Naive thymus-derived CD4-positive, alpha-beta T cell (primary cell): ENCODE measurements at regions of chr7 and their contacts with region 1.

Region 1: DNA sequence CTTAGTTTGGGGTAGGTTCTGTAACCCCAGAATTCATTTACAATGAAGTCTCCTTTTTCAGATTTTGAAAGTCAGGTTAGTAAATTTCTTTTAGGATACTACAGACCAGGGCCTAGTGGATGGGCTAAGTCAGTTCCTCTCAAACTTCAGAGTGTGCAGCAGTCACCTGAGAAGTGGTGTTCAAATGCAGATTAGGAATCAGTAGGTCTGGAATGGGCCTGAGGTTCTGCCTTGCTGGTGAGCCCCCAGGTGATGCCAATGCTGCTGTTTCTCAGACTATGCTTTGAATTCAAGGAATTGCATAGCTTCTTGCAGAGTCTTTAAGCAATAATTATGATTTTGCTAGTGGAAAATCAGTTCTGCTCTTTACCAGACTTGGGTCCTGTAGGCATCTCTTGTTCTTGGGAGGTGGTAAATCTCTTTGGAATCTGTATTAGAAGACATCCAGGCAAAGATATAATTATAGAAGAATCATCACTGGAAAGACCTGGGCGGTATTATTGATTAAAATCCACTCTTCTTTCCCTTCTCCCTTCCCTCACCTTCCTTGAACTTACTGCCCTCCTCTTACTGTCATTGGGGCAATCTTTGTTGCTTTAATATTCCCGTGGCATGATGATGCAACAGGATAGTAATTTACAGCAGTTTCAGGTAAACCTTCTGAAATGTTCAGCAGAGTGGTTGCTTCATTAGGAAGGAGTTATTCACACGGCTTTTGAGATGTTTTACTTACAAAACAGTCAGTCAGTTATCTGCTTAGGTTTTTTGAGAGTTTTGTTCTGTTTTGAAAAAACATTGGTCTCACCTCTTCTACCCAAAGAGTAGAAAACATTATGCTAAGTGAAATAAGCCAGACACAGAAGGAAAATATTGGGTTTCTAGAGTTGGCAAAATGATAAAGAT is 87.2 kb downstream of the NRF1 start:
- DNase-seq: no peak
- ATAC-seq: no peak
- H3K4me3 ChIP-seq: no peak overlapping the region
- H3K4me3 Mint-ChIP-seq: no peak overlapping the region
- H3K27ac ChIP-seq: no peak overlapping the region
- H3K27ac Mint-ChIP-seq: peak overlapping the region in 1 of 9 donors; percentile 44
- H3K4me1 ChIP-seq: no peaks in the 10 kb centered on the region
- H3K4me1 Mint-ChIP-seq: peaks cover 0 to 17% (median 1%) of the 10 kb centered on the region in 7 donors
- H3K27me3 ChIP-seq: no peaks in the 10 kb centered on the region
- H3K27me3 Mint-ChIP-seq: no peaks in the 10 kb centered on the region

Region 2: DNA sequence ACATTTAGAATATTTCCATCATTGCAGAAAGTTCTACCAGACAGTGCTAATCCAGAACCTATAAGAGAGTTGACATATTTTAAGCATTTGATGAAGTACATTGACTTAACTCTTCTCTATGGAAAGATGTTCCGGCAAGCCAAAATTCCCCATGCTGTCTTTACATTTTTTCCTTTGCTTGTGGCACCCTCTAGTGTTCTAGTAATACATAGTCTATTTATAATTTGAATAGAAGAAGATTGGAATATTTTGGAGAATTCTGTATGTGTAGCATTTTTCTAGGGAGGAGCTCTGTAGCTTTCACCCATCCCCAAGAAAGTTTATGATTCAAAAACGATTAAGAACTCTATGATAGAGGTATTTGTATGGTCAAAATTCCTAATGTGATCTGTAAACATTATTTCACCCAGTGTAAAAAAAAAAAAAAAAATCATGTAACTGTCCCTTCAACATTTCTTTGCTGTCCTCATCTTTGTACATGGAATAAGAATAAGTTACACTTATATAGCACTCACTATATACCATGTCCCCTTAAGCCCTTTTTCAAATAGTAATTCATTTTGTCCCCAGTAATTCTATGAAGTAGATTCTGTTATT is 54.0 kb before region 1 on chr7:
- CTCF ChIA-PET with region 1: no interaction called
- POLR2A ChIA-PET with region 1: no interaction called
- intact Hi-C with region 1: loop called in 1 of 2 experiments (anchors 10 kb)
- DNase-seq: peak in 3 of 9 donors; percentile 1 to 25 (median 12)
- ATAC-seq: peak; percentile 37
- H3K4me3 ChIP-seq: no peak overlapping the region
- H3K4me3 Mint-ChIP-seq: no peak overlapping the region
- H3K27ac ChIP-seq: no peak overlapping the region
- H3K27ac Mint-ChIP-seq: peak overlapping the region in 1 of 9 donors; percentile 6
- H3K4me1 ChIP-seq: peaks cover 0 to 3% of the 10 kb centered on the region in 2 donors
- H3K4me1 Mint-ChIP-seq: peaks cover 5 to 61% (median 36%) of the 10 kb centered on the region in 7 donors
- H3K27me3 ChIP-seq: no peaks in the 10 kb centered on the region
- H3K27me3 Mint-ChIP-seq: no peaks in the 10 kb centered on the region